ENCODE measurements at regions of chr9 and their contacts with region 1.

Region 1: DNA sequence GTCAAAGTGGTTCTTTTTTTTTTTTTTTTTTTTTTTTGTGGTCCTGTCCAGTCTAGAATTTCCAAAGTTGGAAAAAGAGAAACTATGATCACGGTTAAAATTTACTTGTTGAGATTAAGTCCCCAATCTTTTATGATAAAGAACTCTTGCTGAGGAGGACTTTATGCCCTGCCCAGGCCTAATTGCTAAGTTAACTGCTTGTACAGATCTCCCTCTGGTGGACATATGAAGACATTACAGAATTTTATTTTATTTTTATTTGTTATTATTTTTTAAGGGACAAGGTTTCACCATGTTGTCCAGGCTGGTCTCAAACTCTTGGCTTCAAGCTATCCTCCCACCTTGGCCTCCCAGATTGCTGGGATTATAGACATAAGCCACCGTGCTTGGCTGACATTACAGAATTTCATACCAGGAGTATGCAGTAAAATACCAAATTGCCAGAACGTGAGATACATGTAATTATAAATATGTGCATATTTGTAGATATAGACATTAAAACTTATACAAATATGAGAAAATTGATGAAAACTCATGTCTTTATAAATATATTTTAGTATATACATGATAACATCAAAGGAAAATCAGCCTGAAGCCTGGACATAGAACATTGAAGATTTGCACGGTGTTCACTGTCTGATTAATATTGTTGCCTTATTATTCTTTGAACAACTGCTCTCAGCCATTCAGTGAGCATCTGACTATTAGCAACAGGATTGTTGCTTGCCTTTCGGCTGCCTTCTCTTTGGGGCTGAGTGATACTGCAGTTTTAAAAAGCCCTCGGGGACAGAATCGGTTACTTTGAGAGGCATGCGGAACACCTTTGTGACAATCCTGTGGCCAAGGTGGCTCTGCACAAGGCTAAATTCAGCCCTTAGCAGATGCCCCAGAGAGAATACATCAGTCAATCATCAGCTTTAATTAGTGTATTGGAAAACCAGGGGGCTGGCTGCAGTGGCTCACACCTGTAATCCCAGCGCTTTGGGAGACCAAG is 91.0 kb downstream of the RFK start:
- DNase-seq: peak; percentile 52
- CTCF ChIP-seq: peak; percentile 38

Region 2: DNA sequence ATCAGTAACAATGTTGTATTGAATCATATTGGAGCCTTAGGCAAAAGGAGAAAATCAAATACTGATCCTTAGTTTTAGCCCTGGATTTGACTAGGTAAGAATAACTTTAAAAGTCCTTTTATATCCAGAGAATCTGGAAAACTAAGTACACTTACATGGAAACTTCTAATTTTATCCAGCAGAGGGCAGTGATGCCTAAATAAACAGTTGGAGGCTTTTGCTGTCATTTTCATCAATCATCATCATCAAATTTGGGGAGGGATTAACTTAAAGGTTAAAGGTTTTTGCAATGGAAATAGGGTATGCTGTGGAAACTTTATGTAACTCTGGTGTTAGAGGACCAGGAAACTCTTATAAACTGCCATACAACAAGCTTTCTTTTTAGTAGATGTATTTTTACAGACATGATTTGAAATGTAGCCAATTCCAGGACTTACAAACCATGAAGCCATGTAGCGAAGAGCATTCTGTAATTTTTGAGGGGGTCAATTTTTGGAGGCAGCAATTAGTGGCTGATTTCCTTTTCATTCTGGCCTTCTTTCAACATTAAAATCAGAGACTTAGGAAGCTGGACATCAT is 1102.3 kb before region 1 on chr9:
- CTCF ChIA-PET with region 1: interaction called, 13 read pairs
- POLR2A ChIA-PET with region 1: no interaction called
- DNase-seq: peak; percentile 31
- CTCF ChIP-seq: peak; percentile 58

Region 3: DNA sequence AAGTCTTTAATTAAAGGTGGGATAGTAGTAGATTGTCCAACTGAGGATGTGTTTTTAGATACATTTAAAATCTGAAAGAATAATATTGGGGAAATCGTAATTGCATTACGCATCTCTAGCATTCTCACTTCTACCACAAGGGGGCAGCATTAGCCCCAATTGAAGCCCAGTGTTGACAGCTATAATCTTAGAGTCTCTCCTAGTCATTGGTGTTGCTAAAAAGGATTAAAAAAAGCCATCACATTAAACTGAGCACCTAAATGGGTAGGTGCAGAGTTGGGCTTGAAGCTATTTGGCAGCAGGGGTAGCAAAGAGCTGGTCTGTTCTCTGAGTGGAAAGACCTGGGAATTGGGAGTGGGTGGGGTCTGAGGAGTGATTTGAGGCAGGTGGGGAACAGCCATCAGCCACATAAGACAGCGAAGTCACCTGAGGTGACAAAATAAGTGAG is 1037.7 kb before region 1 on chr9:
- CTCF ChIA-PET with region 1: interaction called, 17 read pairs
- POLR2A ChIA-PET with region 1: no interaction called
- DNase-seq: peak; percentile 41
- CTCF ChIP-seq: peak; percentile 81

Region 4: GRCh38 chr9:76292246-76292645 is 11.0 kb before region 1 on chr9:
- CTCF ChIA-PET with region 1: interaction called, 43 read pairs
- POLR2A ChIA-PET with region 1: no interaction called
- DNase-seq: no peak
- CTCF ChIP-seq: no peak

Region 5: GRCh38 chr9:76369583-76369982 is 66.3 kb after region 1 on chr9:
- CTCF ChIA-PET with region 1: no interaction called
- POLR2A ChIA-PET with region 1: no interaction called
- DNase-seq: peak; percentile 18
- CTCF ChIP-seq: no peak